Heart left ventricle (tissue), 16 donors: ENCODE measurements at regions of chr17 and their contacts with region 1.

Region 1: DNA sequence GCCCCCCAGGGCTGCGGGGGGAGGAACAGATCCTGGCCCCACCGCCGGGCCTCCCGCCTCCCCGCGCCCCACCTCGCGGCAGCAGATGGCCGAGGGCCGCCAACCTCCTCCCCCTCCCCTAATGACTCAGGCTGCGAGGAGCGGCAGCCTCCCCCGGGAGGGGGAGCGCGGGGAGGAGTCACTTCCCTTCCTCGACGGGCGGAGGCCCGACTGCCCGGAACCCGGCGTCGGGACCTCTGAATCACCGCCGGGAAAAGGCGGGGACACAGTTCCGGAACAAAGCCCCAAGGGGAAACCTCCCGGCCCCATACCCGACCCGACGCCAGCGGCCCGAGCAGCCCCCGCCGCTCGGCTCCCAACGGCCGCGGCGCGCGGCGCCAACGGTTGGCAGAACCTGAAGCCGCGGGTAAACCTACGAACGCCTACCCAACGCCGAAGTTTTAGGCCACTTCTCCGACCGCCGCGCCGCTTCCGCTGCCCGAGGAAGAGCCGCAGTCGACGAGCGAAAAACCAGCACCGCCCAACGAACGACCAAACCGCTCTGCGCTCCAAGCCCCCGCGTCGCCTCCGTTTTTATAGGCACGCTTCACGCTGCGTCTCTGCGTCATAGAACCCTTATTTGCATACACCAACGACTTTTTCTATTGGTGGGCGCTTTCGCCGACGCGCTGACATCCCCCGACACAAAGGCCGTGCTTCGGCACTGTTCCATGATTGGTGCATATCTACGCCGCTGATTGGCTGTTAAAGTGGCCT is 5.2 kb upstream of the UNK start:
- DNase-seq: peak; percentile 97 to 99 (median 98)
- ATAC-seq: peak; percentile 79 to 85 (median 82)
- H3K4me3 ChIP-seq: peak overlapping the region; percentile 67 to 97 (median 88)
- H3K27ac ChIP-seq: peak overlapping the region; percentile 81 to 100 (median 98)
- H3K4me1 ChIP-seq: peaks cover 14 to 59% (median 43%) of the 10 kb centered on the region in 12 donors
- H3K27me3 ChIP-seq: no peaks in the 10 kb centered on the region
- CTCF ChIP-seq: peak in 3 of 12 donors; percentile 11 to 26 (median 16)
- POLR2A ChIP-seq: peak; percentile 100

Region 2: GRCh38 chr17:75827252-75828115 is 48.1 kb after region 1 on chr17:
- intact Hi-C with region 1: loop called in 2 of 10 experiments (anchors 2 to 5 kb)
- DNase-seq: peak; percentile 69 to 88 (median 79)
- ATAC-seq: peak; percentile 25 to 81 (median 67)
- H3K4me3 ChIP-seq: peak overlapping the region in 10 of 12 donors; percentile 27 to 56 (median 40)
- H3K27ac ChIP-seq: peak overlapping the region; percentile 70 to 90 (median 84)
- H3K4me1 ChIP-seq: peaks cover 5 to 37% (median 23%) of the 10 kb centered on the region in 12 donors
- H3K27me3 ChIP-seq: no peaks in the 10 kb centered on the region
- CTCF ChIP-seq: peak; percentile 59 to 83 (median 68)
- POLR2A ChIP-seq: no peak

Region 3: DNA sequence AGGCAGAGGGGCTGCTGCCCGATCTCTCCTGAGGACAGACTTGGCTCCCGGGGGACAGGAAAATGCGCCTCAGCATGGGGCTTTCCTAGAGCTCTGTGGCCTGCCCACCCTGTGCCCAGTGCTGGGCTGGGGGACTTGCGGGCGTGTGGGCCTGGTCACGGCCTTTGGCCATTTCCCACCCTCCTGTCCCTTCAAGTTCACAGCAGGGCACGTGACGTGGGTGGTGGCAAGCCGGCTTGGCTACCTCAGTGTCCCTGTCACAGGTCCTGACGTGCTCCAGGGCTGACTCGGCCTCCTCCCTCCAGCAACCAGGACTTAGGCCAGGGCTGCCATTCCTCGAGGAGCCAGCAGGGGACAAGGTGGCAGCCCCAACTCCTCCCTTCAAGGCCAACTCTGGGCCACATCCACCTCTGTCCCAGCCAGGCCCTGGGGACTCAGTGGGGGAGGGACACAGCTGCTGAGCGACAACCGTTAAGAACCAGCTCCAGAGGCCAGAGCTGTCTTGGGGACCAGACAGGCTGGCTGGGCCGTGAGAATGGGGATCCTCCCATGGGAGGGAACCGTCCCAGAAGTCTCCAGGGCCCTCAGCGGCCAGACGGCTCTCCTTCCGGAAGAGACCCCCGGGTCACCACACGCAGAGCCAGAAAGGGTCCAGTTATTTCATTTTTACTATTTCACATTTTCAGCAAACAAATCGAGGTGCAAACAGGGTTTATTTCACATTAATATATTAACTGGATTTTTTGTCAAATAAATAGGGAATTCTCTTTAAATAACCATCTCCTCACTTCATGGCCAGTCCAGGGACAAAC is 65.8 kb after region 1 on chr17:
- intact Hi-C with region 1: loop called in 4 of 10 experiments (anchors 2 to 5 kb)
- DNase-seq: peak; percentile 86 to 92 (median 90)
- ATAC-seq: peak; percentile 80 to 81 (median 80)
- H3K4me3 ChIP-seq: peak overlapping the region in 3 of 12 donors; percentile 6 to 69 (median 12)
- H3K27ac ChIP-seq: peak overlapping the region; percentile 56 to 99 (median 84)
- H3K4me1 ChIP-seq: peaks cover 36 to 73% (median 58%) of the 10 kb centered on the region in 12 donors
- H3K27me3 ChIP-seq: no peaks in the 10 kb centered on the region
- CTCF ChIP-seq: peak; percentile 64 to 88 (median 80)
- POLR2A ChIP-seq: peak in 1 of 2 donors; percentile 46

Region 4: GRCh38 chr17:75877752-75878173 is 98.4 kb after region 1 on chr17:
- intact Hi-C with region 1: loop called in 5 of 10 experiments (anchors 2 to 10 kb)
- DNase-seq: peak; percentile 67 to 89 (median 76)
- ATAC-seq: peak in 3 of 4 donors; percentile 35 to 67 (median 61)
- H3K4me3 ChIP-seq: peak overlapping the region; percentile 64 to 96 (median 78)
- H3K27ac ChIP-seq: peak overlapping the region; percentile 91 to 99 (median 96)
- H3K4me1 ChIP-seq: peaks cover 14 to 64% (median 42%) of the 10 kb centered on the region in 12 donors
- H3K27me3 ChIP-seq: no peaks in the 10 kb centered on the region
- CTCF ChIP-seq: peak in 9 of 12 donors; percentile 8 to 67 (median 48)
- POLR2A ChIP-seq: no peak

Region 5: GRCh38 chr17:76645481-76645880 is 866.1 kb after region 1 on chr17:
- intact Hi-C with region 1: no loop called
- DNase-seq: no peak
- ATAC-seq: no peak
- H3K4me3 ChIP-seq: no peak overlapping the region
- H3K27ac ChIP-seq: no peak overlapping the region
- H3K4me1 ChIP-seq: peaks cover 0 to 25% (median 5%) of the 10 kb centered on the region in 12 donors
- H3K27me3 ChIP-seq: no peaks in the 10 kb centered on the region
- CTCF ChIP-seq: no peak
- POLR2A ChIP-seq: no peak